Activated CD4-positive, alpha-beta T cell treated with anti-CD3 and anti-CD28 coated beads, Interleukin-2, amount 10 ng/mL, durations not matched to agents 24 days and 14 days (primary cell): ENCODE measurements at regions of chr5 and their contacts with region 1.

Region 1: GRCh38 chr5:14142827-14143548 is at the start of gene TRIO:
- DNase-seq: peak; percentile 94
- H3K4me3 Mint-ChIP-seq: peak within 1 kb of the TSS; percentile 87
- H3K27ac Mint-ChIP-seq: peak within 1 kb of the TSS; percentile 68
- H3K4me1 Mint-ChIP-seq: peaks cover 10% of the 10 kb centered on the region
- H3K27me3 Mint-ChIP-seq: peaks cover 58% of the 10 kb centered on the region
- total RNA-seq, gene TRIO: 8.7 and 14.0 TPM in 2 replicates

Region 2: GRCh38 chr5:14108170-14108996 is 34.6 kb before region 1 on chr5:
- intact Hi-C with region 1: loop called (anchors 2 kb)
- DNase-seq: peak; percentile 70
- H3K4me3 Mint-ChIP-seq: peak overlapping the region; percentile 16
- H3K27ac Mint-ChIP-seq: no peak overlapping the region
- H3K4me1 Mint-ChIP-seq: peaks cover 13% of the 10 kb centered on the region
- H3K27me3 Mint-ChIP-seq: peaks cover 4% of the 10 kb centered on the region

Region 3: DNA sequence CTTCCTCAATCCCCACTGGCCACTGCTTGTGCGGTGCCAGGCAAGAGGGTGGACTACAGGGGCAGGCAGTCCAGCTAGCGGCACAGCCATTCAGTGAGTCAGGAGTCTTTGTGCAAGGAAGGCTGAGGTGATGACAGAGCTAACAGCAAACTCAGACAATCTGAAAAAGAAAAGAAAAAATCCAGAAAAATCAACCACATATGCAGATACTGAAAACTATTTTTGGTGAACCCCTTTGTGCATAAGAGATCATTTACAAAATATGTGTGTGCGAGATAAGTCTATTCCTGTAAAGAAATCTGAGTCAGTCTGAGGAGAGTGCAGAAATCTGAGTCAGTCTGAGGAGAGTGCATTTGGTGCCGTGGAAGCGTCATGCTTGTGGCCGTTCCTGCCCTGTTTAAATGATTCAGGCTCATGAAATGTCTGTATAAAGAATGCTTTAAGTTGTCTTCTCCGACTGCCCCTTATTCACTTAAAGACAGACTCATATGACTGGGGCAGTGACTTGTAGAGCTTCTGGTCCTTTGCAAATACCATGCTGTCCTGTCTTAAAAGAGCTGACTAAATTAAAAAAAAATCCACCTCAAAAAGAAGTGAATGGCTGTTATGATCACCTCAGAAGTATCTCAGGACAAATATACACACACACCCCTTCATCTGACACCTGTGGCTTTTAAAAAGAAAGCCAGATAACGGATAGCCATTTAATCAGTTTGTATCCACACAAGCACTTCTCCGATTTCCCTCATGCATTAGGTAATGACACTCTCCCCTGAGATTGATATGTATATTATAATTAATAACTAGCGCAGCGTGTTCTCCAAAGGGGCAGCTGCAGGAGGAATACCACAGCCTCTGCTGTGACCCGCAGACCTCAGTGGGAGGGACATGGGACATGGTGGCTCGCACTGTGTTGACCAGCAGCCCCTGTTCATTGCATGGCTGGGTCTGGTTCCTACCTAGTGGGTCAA is 47.5 kb after region 1 on chr5:
- intact Hi-C with region 1: no loop called
- DNase-seq: no peak
- H3K4me3 Mint-ChIP-seq: no peak overlapping the region
- H3K27ac Mint-ChIP-seq: no peak overlapping the region
- H3K4me1 Mint-ChIP-seq: no peaks in the 10 kb centered on the region
- H3K27me3 Mint-ChIP-seq: peaks cover 8% of the 10 kb centered on the region

Region 4: GRCh38 chr5:14286574-14287421 is 143.8 kb after region 1 on chr5:
- intact Hi-C with region 1: no loop called
- DNase-seq: no peak
- H3K4me3 Mint-ChIP-seq: no peak overlapping the region
- H3K27ac Mint-ChIP-seq: no peak overlapping the region
- H3K4me1 Mint-ChIP-seq: no peaks in the 10 kb centered on the region
- H3K27me3 Mint-ChIP-seq: peaks cover under 1% of the 10 kb centered on the region